Endothelial cell of umbilical vein (primary cell): ENCODE measurements at regions of chr3 and their contacts with region 1.

Region 1: GRCh38 chr3:44173263-44173662 is 68.4 kb upstream of the TOPAZ1 start:
- DNase-seq: no peak
- H3K4me3 ChIP-seq: no peak overlapping the region
- H3K27ac ChIP-seq: no peak overlapping the region
- H3K4me1 ChIP-seq: no peaks in the 10 kb centered on the region
- H3K27me3 ChIP-seq: no peaks in the 10 kb centered on the region
- CTCF ChIP-seq: no peak
- POLR2A ChIP-seq: no peak

Region 2: DNA sequence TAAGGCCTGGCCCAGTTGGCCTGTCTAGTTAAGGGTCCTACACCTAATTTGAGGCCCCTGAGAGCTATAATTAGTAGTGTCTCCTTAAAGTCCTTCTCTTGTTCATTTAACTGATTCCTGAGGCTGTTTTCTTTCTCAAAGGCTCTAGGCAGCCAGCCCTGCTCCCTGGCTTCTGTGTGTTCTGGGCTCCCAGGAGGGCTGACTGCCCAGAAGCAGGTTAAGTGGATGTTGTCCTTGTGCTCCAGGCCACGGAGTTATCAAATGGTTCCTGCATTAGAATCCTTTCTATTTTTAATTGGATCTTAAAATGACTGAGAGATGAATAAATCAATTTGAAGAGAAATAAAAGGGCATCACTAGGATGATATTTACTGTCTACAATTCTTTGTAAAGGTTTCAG is 746.9 kb before region 1 on chr3:
- CTCF ChIA-PET with region 1: no interaction called
- POLR2A ChIA-PET with region 1: no interaction called
- dilution Hi-C with region 1: no loop called
- intact Hi-C with region 1: no loop called
- DNase-seq: no peak
- H3K4me3 ChIP-seq: no peak overlapping the region
- H3K27ac ChIP-seq: no peak overlapping the region
- H3K4me1 ChIP-seq: no peaks in the 10 kb centered on the region
- H3K27me3 ChIP-seq: no peaks in the 10 kb centered on the region
- CTCF ChIP-seq: no peak
- POLR2A ChIP-seq: no peak

Region 3: DNA sequence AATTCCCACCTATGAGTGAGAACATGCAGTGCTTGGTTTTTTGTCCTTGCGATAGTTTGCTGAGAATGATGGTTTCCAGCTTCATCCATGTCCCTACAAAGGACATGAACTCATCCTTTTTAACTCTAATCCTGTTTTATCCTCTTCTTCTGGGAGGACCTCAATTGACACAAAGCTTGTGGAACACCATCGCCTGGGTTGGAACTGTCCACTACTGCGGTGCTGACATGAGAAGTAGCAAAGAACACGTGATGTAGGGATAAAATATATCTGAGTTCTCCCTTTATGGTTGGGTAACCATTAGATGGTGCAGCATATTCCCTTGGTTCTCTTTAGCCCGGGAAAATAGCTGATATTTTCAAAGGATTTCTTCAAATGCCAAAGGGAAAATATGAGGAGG is 36.8 kb before region 1 on chr3:
- CTCF ChIA-PET with region 1: no interaction called
- POLR2A ChIA-PET with region 1: no interaction called
- dilution Hi-C with region 1: no loop called
- intact Hi-C with region 1: loop called (anchors 5 kb)
- DNase-seq: peak; percentile 4
- H3K4me3 ChIP-seq: no peak overlapping the region
- H3K27ac ChIP-seq: no peak overlapping the region
- H3K4me1 ChIP-seq: no peaks in the 10 kb centered on the region
- H3K27me3 ChIP-seq: no peaks in the 10 kb centered on the region
- CTCF ChIP-seq: no peak
- POLR2A ChIP-seq: no peak

Region 4: DNA sequence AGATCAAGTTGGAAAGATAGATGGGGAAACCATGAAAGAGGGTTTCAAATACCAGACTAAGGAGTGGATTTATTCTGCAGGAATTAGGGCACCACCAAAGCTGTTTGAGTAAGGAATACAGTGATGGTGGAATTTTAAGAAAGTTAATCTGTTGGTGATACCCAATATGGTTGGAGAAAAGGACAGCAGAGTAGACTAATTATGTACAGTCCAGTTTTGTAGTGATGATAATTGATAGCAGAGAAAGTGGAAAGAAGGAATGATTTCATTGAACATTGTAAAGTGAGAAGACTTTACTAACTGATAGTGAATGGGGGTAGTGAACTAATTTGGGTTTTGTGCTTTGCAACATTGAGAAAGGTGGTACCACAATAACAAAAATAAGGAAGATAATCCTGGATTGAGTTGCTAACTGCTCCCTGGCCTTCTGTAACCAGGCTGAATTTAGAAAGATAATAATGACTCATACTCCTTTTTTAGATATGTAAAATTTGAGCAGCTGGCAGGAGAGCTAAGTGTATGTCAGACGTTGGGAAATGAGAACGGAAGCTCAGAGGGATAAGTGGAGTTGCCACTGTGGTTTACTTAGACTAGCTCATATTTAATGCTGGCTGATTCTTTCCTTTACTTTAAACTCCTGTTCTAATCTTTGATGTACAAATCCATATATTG is 182.2 kb after region 1 on chr3:
- CTCF ChIA-PET with region 1: no interaction called
- POLR2A ChIA-PET with region 1: no interaction called
- dilution Hi-C with region 1: no loop called
- intact Hi-C with region 1: no loop called
- DNase-seq: peak; percentile 60
- H3K4me3 ChIP-seq: no peak overlapping the region
- H3K27ac ChIP-seq: no peak overlapping the region
- H3K4me1 ChIP-seq: peaks cover 6% of the 10 kb centered on the region
- H3K27me3 ChIP-seq: no peaks in the 10 kb centered on the region
- CTCF ChIP-seq: no peak
- POLR2A ChIP-seq: no peak